BJ (cell line): ENCODE measurements at regions of chr15 and their contacts with region 1.

Region 1: DNA sequence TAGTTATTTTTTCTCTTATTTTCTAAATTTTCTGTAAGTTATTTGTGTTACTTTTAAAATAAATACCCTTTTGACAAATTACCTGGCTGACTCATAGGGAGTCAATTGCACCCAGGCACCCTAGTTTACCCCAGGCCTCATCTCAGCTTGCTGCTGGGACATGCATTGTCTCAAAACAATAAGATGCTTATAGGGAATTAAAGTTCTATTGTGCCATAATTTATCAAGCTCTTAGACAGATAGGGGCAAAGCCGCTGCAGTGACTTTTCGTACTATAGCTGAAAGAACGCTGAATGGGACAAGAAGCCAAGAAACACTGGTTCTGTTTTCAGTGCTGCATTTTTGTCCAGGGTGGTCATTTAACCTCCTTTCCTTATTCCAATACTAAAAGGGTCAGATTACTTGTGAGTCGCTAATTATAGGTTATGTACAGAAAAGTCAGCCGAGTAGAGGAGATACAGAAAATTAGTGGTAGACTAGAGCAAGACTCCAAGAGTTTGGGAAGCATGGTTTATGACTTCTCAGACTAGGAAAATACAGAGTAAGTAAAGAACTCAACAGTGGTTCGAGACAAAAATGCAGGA is 50.3 kb downstream of the EXD1 start:
- DNase-seq: no peak
- H3K4me3 ChIP-seq: no peak overlapping the region
- H3K27me3 ChIP-seq: no peaks in the 10 kb centered on the region
- CTCF ChIP-seq: no peak

Region 2: GRCh38 chr15:41079717-41080116 is 100.6 kb before region 1 on chr15:
- CTCF ChIA-PET with region 1: interaction called, 3 read pairs
- POLR2A ChIA-PET with region 1: interaction called, 17 read pairs
- DNase-seq: no peak
- H3K4me3 ChIP-seq: no peak overlapping the region
- H3K27me3 ChIP-seq: no peaks in the 10 kb centered on the region
- CTCF ChIP-seq: no peak

Region 3: DNA sequence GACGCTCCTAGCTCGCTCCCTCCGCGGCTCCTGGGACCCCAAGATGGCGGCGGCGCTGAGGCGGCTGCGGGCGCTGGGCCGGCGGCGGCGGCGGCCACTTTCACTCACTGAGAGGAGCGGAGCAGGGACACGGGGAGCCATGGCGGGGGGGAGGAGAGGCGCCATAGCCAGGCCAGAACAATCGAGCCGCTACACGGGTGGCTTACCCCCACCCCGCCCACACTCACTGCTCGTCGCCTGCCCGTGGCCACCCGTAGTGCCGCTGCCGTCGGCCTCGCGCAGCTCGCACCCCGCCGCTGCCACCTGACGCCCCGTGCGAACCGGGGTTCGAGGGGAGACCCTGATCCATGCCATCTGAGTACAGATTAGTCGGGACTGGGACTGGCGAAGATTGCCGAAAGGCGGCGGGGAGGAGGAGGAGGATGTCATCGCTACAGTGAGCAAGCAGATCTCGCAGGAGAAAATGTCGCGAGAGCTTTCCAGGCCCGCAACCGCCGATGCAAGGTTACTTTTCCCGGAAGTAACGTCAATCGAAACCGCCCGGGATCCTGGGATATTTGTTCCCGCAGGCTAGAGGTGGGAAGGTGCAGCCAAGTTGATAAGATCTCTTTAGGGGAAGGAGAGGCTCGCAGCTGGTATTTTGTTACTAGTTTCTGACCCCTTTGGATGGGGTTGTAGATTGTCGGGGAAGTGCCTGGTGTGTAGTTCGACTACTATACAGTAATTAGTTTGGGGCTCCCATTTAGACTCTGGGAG is 64.0 kb before region 1 on chr15 and contains the start of gene INO80:
- CTCF ChIA-PET with region 1: interaction called, 11 read pairs
- POLR2A ChIA-PET with region 1: interaction called, 15 read pairs
- DNase-seq: peak; percentile 82
- H3K4me3 ChIP-seq: peak within 1 kb of the TSS; percentile 94
- H3K27me3 ChIP-seq: no peaks in the 10 kb centered on the region
- CTCF ChIP-seq: no peak
- polyA plus RNA-seq, gene INO80: 4.3 and 5.2 TPM in 2 replicates

Region 4: GRCh38 chr15:41230650-41231533 is 50.6 kb after region 1 on chr15 and contains the starts of genes CHP1 and EXD1:
- CTCF ChIA-PET with region 1: no interaction called
- POLR2A ChIA-PET with region 1: no interaction called
- DNase-seq: peak; percentile 84
- H3K4me3 ChIP-seq: peak within 1 kb of the TSS; percentile 90
- H3K27me3 ChIP-seq: no peaks in the 10 kb centered on the region
- CTCF ChIP-seq: peak; percentile 99
- polyA plus RNA-seq, gene CHP1: 59.9 and 67.2 TPM in 2 replicates
- polyA plus RNA-seq, gene EXD1: not detected in 2 replicates